H1 (cell line): ENCODE measurements at regions of chr3 and their contacts with region 1.

Region 1: GRCh38 chr3:129428376-129429079 is at the start of gene EFCAB12:
- DNase-seq: peak; percentile 89 to 98
- H3K4me3 ChIP-seq: peak within 1 kb of the TSS; percentile 41 to 73 (median 60)
- H3K27ac ChIP-seq: peak within 1 kb of the TSS; percentile 75
- H3K4me1 ChIP-seq: peaks cover 7 to 31% (median 15%) of the 10 kb centered on the region in 4 experiments
- H3K27me3 ChIP-seq: peaks cover 0 to 10% (median 8%) of the 10 kb centered on the region in 4 experiments; a peak in 5 of 7 replicates
- CTCF ChIP-seq: no peak
- EP300 ChIP-seq: no peak
- POLR2A ChIP-seq: peak in 1 of 2 experiments; percentile 73; a peak in 2 of 3 replicates
- RAD21 ChIP-seq: no peak
- total RNA-seq, gene EFCAB12: 0.75 and 0.99 TPM in 2 replicates

Region 2: GRCh38 chr3:129404610-129405009 is 23.9 kb before region 1 on chr3:
- CTCF ChIA-PET with region 1: interaction called, 7 read pairs
- POLR2A ChIA-PET with region 1: interaction called, 13 read pairs
- DNase-seq: no peak
- H3K4me3 ChIP-seq: no peak overlapping the region
- H3K27ac ChIP-seq: no peak overlapping the region
- H3K4me1 ChIP-seq: no peaks in the 10 kb centered on the region
- H3K27me3 ChIP-seq: no peaks in the 10 kb centered on the region; a peak in 1 of 7 replicates
- CTCF ChIP-seq: no peak
- EP300 ChIP-seq: no peak
- POLR2A ChIP-seq: no peak
- RAD21 ChIP-seq: no peak

Region 3: GRCh38 chr3:129413687-129414506 is 14.6 kb before region 1 on chr3:
- CTCF ChIA-PET with region 1: interaction called, 7 read pairs
- POLR2A ChIA-PET with region 1: interaction called, 12 read pairs
- DNase-seq: no peak
- H3K4me3 ChIP-seq: no peak overlapping the region
- H3K27ac ChIP-seq: no peak overlapping the region
- H3K4me1 ChIP-seq: no peaks in the 10 kb centered on the region; a peak in 1 of 7 replicates
- H3K27me3 ChIP-seq: peaks cover 0 to 5% (median 0%) of the 10 kb centered on the region in 4 experiments; a peak in 2 of 7 replicates
- CTCF ChIP-seq: no peak
- EP300 ChIP-seq: no peak
- POLR2A ChIP-seq: no peak
- RAD21 ChIP-seq: no peak

Region 4: GRCh38 chr3:129439817-129440617 is 11.5 kb after region 1 on chr3 and contains the starts of genes IFT122 and MBD4:
- CTCF ChIA-PET with region 1: interaction called, 8 read pairs
- POLR2A ChIA-PET with region 1: interaction called, 61 read pairs
- DNase-seq: peak; percentile 95 to 98
- H3K4me3 ChIP-seq: peak within 1 kb of the TSS; percentile 76 to 95 (median 86)
- H3K27ac ChIP-seq: peak within 1 kb of the TSS; percentile 68
- H3K4me1 ChIP-seq: peaks cover 0 to 8% (median 4%) of the 10 kb centered on the region in 4 experiments; a peak in 5 of 7 replicates
- H3K27me3 ChIP-seq: no peaks in the 10 kb centered on the region
- CTCF ChIP-seq: no peak
- EP300 ChIP-seq: no peak
- POLR2A ChIP-seq: peak; percentile 64 to 83; a peak in 2 of 3 replicates
- RAD21 ChIP-seq: no peak
- total RNA-seq, gene IFT122: 23.7 and 26.2 TPM in 2 replicates
- total RNA-seq, gene MBD4: 33.4 and 35.8 TPM in 2 replicates

Region 5: GRCh38 chr3:129567176-129567705 is 138.7 kb after region 1 on chr3:
- CTCF ChIA-PET with region 1: no interaction called
- POLR2A ChIA-PET with region 1: no interaction called
- DNase-seq: no peak
- H3K4me3 ChIP-seq: no peak overlapping the region
- H3K27ac ChIP-seq: no peak overlapping the region
- H3K4me1 ChIP-seq: no peaks in the 10 kb centered on the region
- H3K27me3 ChIP-seq: no peaks in the 10 kb centered on the region
- CTCF ChIP-seq: no peak
- EP300 ChIP-seq: no peak
- POLR2A ChIP-seq: no peak
- RAD21 ChIP-seq: no peak